ENCODE measurements at regions of chr9 and their contacts with region 1.

Region 1: GRCh38 chr9:92325269-92325990 is at the starts of genes CENPP and NOL8:
- DNase-seq: peak; percentile 94
- H3K4me3 ChIP-seq: peak within 1 kb of the TSS; percentile 78
- H3K27ac ChIP-seq: peak within 1 kb of the TSS; percentile 99
- H3K4me1 ChIP-seq: peaks cover 11% of the 10 kb centered on the region
- H3K27me3 ChIP-seq: no peaks in the 10 kb centered on the region
- CTCF ChIP-seq: no peak
- total RNA-seq, gene CENPP: 15.6 and 17.4 TPM in 2 replicates
- total RNA-seq, gene NOL8: 53.4 and 59.7 TPM in 2 replicates

Region 2: DNA sequence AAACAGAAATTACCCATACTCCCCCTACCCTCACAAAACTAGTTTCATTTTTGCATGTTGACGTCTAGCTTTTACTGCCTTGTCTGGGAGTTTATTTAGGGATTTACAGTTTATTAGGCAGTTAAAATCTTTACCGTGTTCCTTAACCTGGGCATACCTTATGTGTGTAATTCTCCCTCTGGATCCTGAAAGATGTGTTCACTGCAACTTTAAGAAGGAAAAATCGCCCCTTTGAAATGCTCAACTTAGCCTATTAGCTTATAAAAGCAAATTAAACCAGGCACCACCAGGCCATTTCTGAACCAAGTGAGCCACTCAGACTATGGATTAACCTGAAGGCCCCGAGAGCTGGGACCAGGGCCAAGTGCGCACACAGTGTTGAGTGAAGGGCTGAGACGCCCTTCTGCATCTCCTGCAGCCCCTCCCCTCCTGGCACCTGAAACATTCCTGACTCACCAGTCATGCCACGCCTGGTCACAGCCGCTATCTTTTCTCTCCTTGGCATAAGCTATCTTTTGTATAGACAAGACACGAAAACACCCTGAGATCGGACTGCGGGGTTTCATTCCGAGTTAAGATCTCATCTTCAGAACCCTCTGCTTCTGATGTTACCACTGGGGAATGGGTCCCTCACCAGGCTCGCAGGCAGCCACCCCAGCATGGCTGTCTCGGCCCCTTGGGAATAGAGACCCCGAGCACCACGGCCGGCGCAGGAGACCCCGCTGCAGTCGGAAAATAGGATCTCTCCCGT is 487.3 kb before region 1 on chr9:
- CTCF ChIA-PET with region 1: no interaction called
- POLR2A ChIA-PET with region 1: no interaction called
- intact Hi-C with region 1: no loop called
- DNase-seq: peak; percentile 45
- H3K4me3 ChIP-seq: no peak overlapping the region
- H3K27ac ChIP-seq: no peak overlapping the region
- H3K4me1 ChIP-seq: peaks cover 25% of the 10 kb centered on the region
- H3K27me3 ChIP-seq: no peaks in the 10 kb centered on the region
- CTCF ChIP-seq: no peak

Region 3: DNA sequence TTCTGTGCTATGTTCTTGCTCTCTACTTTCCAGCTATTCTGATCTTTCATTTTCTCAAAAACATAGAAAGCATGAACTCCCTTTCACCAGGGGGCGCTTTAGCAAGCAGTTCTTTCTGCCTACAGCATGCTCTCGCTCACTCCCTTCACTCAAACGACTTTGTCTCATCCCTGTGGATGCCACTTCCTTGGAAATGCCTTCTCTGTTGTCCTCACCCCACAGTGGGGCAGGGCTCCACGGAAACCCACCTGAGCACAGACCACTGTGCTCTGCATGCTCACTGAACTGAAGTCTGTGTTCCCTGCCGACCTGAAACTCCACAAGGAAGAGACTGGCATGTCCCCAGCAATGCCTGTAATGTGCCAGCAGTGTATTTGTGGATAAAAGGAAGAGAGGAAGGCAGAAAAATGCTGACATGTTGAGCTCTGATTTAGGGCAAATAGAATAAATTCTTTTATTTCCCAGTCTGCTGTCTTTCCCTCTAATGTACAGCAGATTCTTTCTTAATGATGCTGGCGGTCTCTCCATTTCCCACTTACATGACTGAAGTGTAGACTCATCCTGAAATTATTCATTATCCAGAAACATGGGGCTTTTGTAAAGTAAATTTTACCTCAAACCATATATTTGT is 370.5 kb before region 1 on chr9:
- CTCF ChIA-PET with region 1: no interaction called
- POLR2A ChIA-PET with region 1: no interaction called
- intact Hi-C with region 1: no loop called
- DNase-seq: peak; percentile 80
- H3K4me3 ChIP-seq: no peak overlapping the region
- H3K27ac ChIP-seq: no peak overlapping the region
- H3K4me1 ChIP-seq: no peaks in the 10 kb centered on the region
- H3K27me3 ChIP-seq: no peaks in the 10 kb centered on the region
- CTCF ChIP-seq: peak; percentile 90

Region 4: GRCh38 chr9:92151691-92152393 is 173.6 kb before region 1 on chr9:
- CTCF ChIA-PET with region 1: no interaction called
- POLR2A ChIA-PET with region 1: no interaction called
- intact Hi-C with region 1: no loop called
- DNase-seq: no peak
- H3K4me3 ChIP-seq: no peak overlapping the region
- H3K27ac ChIP-seq: no peak overlapping the region
- H3K4me1 ChIP-seq: peaks cover 6% of the 10 kb centered on the region
- H3K27me3 ChIP-seq: no peaks in the 10 kb centered on the region
- CTCF ChIP-seq: no peak

Region 5: DNA sequence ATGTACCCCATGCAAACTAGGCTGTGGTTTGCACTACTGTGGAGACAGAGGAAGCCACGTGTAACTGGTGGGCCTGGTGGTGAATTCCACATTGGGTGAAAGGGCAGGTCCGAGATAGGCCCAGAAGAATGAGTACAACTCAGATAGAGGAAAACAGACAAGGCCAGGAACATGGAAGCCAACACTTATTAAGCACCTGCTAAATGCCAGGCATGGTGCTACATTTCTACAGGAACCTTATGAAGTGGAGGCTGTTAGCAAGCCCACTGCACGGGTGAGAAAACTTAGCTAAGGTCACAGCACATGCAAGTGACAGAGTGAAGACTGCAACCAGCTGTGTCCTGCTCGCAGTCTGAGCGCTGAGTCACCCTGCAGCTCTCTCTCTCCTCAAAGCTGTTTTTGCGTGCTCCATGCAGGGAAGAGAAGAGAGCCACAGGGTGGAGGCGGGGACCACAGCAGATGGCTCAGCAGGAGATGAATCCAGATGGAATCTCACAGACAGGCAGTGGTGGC is 144.7 kb before region 1 on chr9:
- CTCF ChIA-PET with region 1: no interaction called
- POLR2A ChIA-PET with region 1: interaction called, 10 read pairs
- intact Hi-C with region 1: no loop called
- DNase-seq: peak; percentile 78
- H3K4me3 ChIP-seq: no peak overlapping the region
- H3K27ac ChIP-seq: no peak overlapping the region
- H3K4me1 ChIP-seq: peaks cover 9% of the 10 kb centered on the region
- H3K27me3 ChIP-seq: no peaks in the 10 kb centered on the region
- CTCF ChIP-seq: no peak

Region 6: GRCh38 chr9:92312887-92313623 is 12.4 kb before region 1 on chr9:
- CTCF ChIA-PET with region 1: no interaction called
- POLR2A ChIA-PET with region 1: interaction called, 10 read pairs
- intact Hi-C with region 1: no loop called
- DNase-seq: no peak
- H3K4me3 ChIP-seq: no peak overlapping the region
- H3K27ac ChIP-seq: peak overlapping the region; percentile 48
- H3K4me1 ChIP-seq: no peaks in the 10 kb centered on the region
- H3K27me3 ChIP-seq: no peaks in the 10 kb centered on the region
- CTCF ChIP-seq: no peak

Region 7: GRCh38 chr9:92377876-92378275 is 52.4 kb after region 1 on chr9:
- CTCF ChIA-PET with region 1: no interaction called
- POLR2A ChIA-PET with region 1: no interaction called
- intact Hi-C with region 1: no loop called
- DNase-seq: no peak
- H3K4me3 ChIP-seq: no peak overlapping the region
- H3K27ac ChIP-seq: peak overlapping the region; percentile 77
- H3K4me1 ChIP-seq: peaks cover 28% of the 10 kb centered on the region
- H3K27me3 ChIP-seq: no peaks in the 10 kb centered on the region
- CTCF ChIP-seq: no peak

Region 8: GRCh38 chr9:92438900-92439526 is 113.6 kb after region 1 on chr9:
- CTCF ChIA-PET with region 1: interaction called, 13 read pairs
- POLR2A ChIA-PET with region 1: no interaction called
- intact Hi-C with region 1: loop called (anchors 5 kb)
- DNase-seq: peak; percentile 29
- H3K4me3 ChIP-seq: no peak overlapping the region
- H3K27ac ChIP-seq: no peak overlapping the region
- H3K4me1 ChIP-seq: peaks cover under 1% of the 10 kb centered on the region
- H3K27me3 ChIP-seq: no peaks in the 10 kb centered on the region
- CTCF ChIP-seq: peak; percentile 58; the same call in 1 of the 2 replicates

Region 9: DNA sequence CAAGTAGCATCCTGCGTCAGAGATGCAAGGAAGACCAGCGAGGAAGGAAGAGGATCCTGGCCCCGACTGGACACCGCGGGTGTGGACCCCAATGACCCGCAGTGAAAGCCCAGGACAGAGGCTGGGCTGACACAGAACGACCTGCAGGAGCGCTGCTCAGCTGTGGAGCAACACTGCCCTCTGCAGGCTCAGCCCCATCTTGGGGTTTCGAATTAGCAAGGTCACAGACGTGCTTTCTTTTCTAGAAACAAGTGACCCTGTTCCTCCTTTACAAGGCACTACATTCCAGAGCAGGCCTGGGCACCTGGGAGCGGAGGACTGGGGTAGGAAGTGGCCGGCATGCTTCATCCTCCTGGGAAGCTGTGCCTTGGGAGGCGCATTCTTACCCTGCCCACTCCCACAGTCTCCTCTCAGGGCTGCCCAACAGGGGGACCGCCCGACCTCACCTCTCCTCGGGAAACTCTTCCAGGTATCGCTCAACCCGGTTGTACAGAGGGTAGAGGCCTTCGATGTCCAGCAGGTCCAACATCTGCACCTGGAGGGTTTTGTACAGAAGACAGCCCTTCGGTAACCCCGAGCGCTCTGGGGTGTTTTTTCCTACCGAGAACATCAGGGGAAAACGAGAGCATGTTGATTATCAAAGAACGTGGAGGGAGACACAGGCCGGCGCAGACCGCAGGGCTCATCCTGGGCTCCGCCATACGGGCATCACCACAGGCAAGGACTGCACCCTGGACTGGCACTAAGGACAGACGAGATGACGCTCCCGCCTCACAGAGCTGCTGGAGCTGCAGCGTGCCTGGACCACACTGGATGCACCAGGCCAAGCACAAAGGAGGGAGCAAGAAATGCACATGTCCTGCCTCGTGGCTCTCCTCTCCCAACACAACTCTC is 309.5 kb after region 1 on chr9:
- CTCF ChIA-PET with region 1: interaction called, 9 read pairs
- POLR2A ChIA-PET with region 1: no interaction called
- intact Hi-C with region 1: loop called (anchors 1 kb)
- DNase-seq: peak; percentile 66
- H3K4me3 ChIP-seq: no peak overlapping the region
- H3K27ac ChIP-seq: no peak overlapping the region
- H3K4me1 ChIP-seq: no peaks in the 10 kb centered on the region
- H3K27me3 ChIP-seq: no peaks in the 10 kb centered on the region
- CTCF ChIP-seq: peak; percentile 93

Region 10: DNA sequence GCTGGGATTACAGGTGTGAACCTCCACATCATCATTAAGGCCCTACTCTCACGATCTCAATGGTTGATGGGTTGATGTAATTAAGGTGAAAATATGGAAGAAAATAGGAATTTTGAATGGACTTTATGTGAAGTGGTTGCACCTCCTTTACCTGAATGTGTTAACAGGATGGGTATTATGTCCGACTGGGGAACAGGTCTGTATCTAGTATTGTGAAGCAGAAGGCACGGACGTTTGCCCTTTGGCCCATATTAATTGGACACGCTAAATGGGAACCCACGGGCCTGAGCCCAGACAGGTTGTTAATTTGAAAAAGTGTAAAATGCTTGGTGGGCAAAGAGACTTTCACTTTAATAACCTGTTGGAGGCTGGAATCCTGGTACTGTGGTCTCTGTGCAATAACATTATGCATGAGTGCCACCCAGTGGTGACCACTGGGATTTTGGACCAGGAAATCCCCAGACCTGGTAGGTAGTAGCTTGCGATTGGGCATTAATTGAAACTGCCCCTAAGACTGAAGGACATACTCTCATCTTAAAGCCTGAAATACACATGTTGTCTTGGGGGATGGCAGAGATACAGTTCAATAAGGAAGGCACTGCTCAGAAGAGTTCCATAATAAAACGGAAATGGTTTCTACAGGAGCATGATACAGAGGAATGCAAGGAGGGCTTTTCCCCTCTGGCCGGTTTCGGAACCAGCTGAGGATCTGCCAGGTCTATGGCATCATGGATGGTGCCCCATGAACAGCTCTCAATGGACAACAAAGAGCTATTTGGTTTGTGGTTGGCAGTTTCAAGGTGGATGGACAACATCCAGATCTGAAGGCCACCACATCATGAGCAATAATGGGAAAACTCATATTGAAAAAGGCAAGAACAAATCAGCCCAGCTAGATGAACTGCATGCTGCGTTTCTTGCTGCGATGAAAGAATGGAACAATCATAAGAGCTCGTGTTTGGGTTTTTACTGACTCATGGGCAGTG is 465.4 kb after region 1 on chr9:
- CTCF ChIA-PET with region 1: interaction called, 6 read pairs
- POLR2A ChIA-PET with region 1: no interaction called
- intact Hi-C with region 1: loop called (anchors 10 kb)
- DNase-seq: peak; percentile 81
- H3K4me3 ChIP-seq: no peak overlapping the region
- H3K27ac ChIP-seq: no peak overlapping the region
- H3K4me1 ChIP-seq: no peaks in the 10 kb centered on the region
- H3K27me3 ChIP-seq: peaks cover 7% of the 10 kb centered on the region
- CTCF ChIP-seq: peak; percentile 85

Measured in A673 (cell line).